Stomach (tissue), 19 donors: ENCODE measurements at regions of chr7 and their contacts with region 1.

Region 1: DNA sequence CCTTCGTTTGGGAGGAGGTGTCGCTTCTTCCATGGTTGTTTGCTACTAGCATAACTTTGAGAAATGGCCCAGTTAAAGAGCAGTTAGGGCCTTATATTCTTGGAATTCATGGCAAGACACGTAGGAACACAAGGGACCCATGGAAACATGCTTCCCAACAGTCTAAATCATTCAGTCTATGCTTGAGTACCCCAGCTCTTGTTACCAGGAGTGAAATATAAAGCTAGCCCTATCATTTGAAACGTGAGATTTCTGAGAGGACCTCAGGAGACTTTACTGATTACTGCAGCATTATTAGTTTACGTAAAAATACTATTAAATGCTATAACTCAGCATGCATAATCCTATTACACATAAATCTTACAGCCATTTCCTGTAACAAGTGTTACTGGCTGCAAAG is 328.6 kb upstream of the CDC14C start:
- DNase-seq: no peak
- H3K4me3 ChIP-seq: no peak overlapping the region
- H3K27ac ChIP-seq: no peak overlapping the region
- H3K4me1 ChIP-seq: no peaks in the 10 kb centered on the region
- H3K27me3 ChIP-seq: no peaks in the 10 kb centered on the region
- CTCF ChIP-seq: no peak
- EP300 ChIP-seq: no peak
- POLR2A ChIP-seq: no peak

Region 2: DNA sequence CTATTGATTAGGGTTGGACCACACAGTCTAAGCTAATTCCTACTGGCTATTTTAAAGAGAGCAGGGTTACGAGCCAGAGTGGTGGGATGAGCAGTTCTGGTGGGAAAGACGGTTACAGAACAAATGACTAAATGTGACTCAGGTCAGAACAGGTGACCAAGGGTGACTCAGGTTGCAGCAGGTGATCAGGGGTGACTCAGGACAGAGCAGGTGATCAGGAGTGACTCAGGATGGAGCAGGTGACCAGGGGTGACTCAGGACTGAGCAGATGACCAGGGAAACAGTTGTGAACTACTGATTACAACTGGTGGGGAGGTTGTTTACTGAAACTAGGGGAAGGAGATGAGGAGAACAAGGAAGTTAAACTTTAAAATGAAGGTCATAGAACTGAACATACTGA is 58.2 kb before region 1 on chr7:
- intact Hi-C with region 1: loop called (anchors 10 kb)
- DNase-seq: no peak
- H3K4me3 ChIP-seq: no peak overlapping the region
- H3K27ac ChIP-seq: no peak overlapping the region
- H3K4me1 ChIP-seq: no peaks in the 10 kb centered on the region
- H3K27me3 ChIP-seq: no peaks in the 10 kb centered on the region
- CTCF ChIP-seq: no peak
- EP300 ChIP-seq: no peak
- POLR2A ChIP-seq: no peak